ENCODE measurements at regions of chr22 and their contacts with region 1.

Region 1: GRCh38 chr22:16804882-16805281 is 20.3 kb downstream of the XKR3 start:
- DNase-seq: peak; percentile 31
- H3K4me3 ChIP-seq: no peak overlapping the region
- H3K27ac ChIP-seq: peak overlapping the region; percentile 17
- H3K4me1 ChIP-seq: peaks cover 37% of the 10 kb centered on the region
- CTCF ChIP-seq: no peak

Region 2: DNA sequence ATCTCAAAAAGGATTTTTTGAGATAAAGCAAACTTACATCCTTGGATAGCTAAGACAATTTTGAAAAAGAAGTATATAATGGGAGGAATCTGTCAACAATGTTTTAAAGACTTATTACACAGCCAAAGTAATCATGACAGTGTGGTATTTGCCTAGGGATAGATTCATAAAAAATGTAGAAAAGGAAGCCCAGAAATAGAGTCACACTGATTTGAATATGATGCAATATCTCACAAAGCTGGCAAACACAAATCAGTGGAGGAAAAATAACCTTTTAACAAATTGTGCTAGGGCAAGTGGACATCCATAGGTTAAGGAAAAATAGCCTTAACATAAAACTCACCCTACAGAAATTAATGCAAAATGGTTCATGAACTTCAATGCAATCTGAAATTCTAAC is 14.4 kb after region 1 on chr22:
- CTCF ChIA-PET with region 1: no interaction called
- POLR2A ChIA-PET with region 1: interaction called, 15 read pairs
- intact Hi-C with region 1: no loop called
- DNase-seq: peak; percentile 60
- H3K4me3 ChIP-seq: peak overlapping the region; percentile 21
- H3K27ac ChIP-seq: peak overlapping the region; percentile 19
- H3K4me1 ChIP-seq: peaks cover 26% of the 10 kb centered on the region
- CTCF ChIP-seq: no peak